IMR-90 (cell line): ENCODE measurements at regions of chr9 and their contacts with region 1.

Region 1: GRCh38 chr9:110427497-110428104 is 89.9 kb upstream of the TXNDC8 start:
- DNase-seq: peak; percentile 28
- ATAC-seq: peak; percentile 12
- H3K4me3 ChIP-seq: no peak overlapping the region
- H3K27ac ChIP-seq: peak overlapping the region; percentile 91; the same call in 1 of the 2 replicates
- H3K4me1 ChIP-seq: peaks cover 8% of the 10 kb centered on the region
- H3K27me3 ChIP-seq: no peaks in the 10 kb centered on the region
- CTCF ChIP-seq: peak; percentile 47
- POLR2A ChIP-seq: no peak
- RAD21 ChIP-seq: peak; percentile 57

Region 2: DNA sequence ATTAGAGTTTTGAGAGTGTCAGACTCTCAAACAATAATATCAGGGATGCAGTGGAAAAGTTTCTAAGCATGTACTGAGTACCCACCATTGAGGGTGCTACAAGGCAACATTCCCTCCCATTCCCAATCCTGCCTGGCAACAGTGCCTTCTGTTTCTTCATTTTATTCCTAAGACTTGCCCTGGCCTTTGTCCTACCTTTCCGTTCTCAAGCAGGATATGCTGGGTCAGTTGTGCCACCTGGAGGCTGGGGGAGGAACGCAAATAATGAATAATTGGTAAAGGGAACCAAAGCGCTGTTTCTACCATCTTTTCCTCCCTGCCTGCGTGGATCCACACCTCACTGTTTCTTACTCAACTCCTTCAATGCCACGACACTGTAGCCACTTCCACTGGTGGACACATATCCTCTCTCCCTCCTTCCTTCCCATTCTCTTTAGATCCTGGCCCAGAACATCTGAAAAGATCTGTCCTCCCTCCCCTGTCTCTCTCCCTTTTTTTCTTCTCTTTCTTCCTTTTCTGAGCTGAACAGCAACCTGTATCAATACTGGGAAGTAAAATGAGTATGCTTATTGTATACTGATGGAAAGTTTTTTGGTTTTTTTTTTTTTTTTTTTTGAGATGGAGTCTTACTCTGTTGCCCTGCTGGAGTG is 369.2 kb before region 1 on chr9:
- CTCF ChIA-PET with region 1: no interaction called
- POLR2A ChIA-PET with region 1: interaction called, 16 read pairs
- dilution Hi-C with region 1: no loop called
- in situ Hi-C with region 1: no loop called
- intact Hi-C with region 1: no loop called
- DNase-seq: peak; percentile 52
- ATAC-seq: peak; percentile 16
- H3K4me3 ChIP-seq: no peak overlapping the region
- H3K27ac ChIP-seq: no peak overlapping the region; the same call in 1 of the 2 replicates
- H3K4me1 ChIP-seq: peaks cover 8% of the 10 kb centered on the region
- H3K27me3 ChIP-seq: no peaks in the 10 kb centered on the region
- CTCF ChIP-seq: peak; percentile 47
- POLR2A ChIP-seq: no peak
- RAD21 ChIP-seq: peak; percentile 68

Region 3: GRCh38 chr9:110291921-110292575 is 135.6 kb before region 1 on chr9:
- CTCF ChIA-PET with region 1: no interaction called
- POLR2A ChIA-PET with region 1: no interaction called
- dilution Hi-C with region 1: no loop called
- in situ Hi-C with region 1: no loop called
- intact Hi-C with region 1: no loop called
- DNase-seq: no peak
- ATAC-seq: no peak
- H3K4me3 ChIP-seq: no peak overlapping the region
- H3K27ac ChIP-seq: no peak overlapping the region
- H3K4me1 ChIP-seq: no peaks in the 10 kb centered on the region
- H3K27me3 ChIP-seq: peaks cover 8% of the 10 kb centered on the region; the same call in 1 of the 2 replicates
- CTCF ChIP-seq: no peak
- POLR2A ChIP-seq: no peak
- RAD21 ChIP-seq: no peak

Region 4: GRCh38 chr9:110443146-110443865 is 15.7 kb after region 1 on chr9:
- CTCF ChIA-PET with region 1: interaction called, 3 read pairs
- POLR2A ChIA-PET with region 1: no interaction called
- dilution Hi-C with region 1: no loop called
- in situ Hi-C with region 1: no loop called
- intact Hi-C with region 1: loop called (anchors 1 kb)
- DNase-seq: peak; percentile 84
- ATAC-seq: peak; percentile 12
- H3K4me3 ChIP-seq: no peak overlapping the region
- H3K27ac ChIP-seq: peak overlapping the region; percentile 57
- H3K4me1 ChIP-seq: peaks cover 16% of the 10 kb centered on the region
- H3K27me3 ChIP-seq: no peaks in the 10 kb centered on the region
- CTCF ChIP-seq: no peak
- POLR2A ChIP-seq: no peak
- RAD21 ChIP-seq: no peak

Region 5: GRCh38 chr9:110640736-110641135 is 213.1 kb after region 1 on chr9:
- CTCF ChIA-PET with region 1: no interaction called
- POLR2A ChIA-PET with region 1: no interaction called
- dilution Hi-C with region 1: no loop called
- in situ Hi-C with region 1: no loop called
- intact Hi-C with region 1: no loop called
- DNase-seq: no peak
- ATAC-seq: no peak
- H3K4me3 ChIP-seq: no peak overlapping the region
- H3K27ac ChIP-seq: peak overlapping the region; percentile 53; the same call in 1 of the 2 replicates
- H3K4me1 ChIP-seq: peaks cover 6% of the 10 kb centered on the region; the same call in 1 of the 2 replicates
- H3K27me3 ChIP-seq: no peaks in the 10 kb centered on the region
- CTCF ChIP-seq: no peak
- POLR2A ChIP-seq: no peak
- RAD21 ChIP-seq: no peak